Activated naive CD4-positive, alpha-beta T cell treated with anti-CD3 and anti-CD28 coated beads for 36 hours (primary cell): ENCODE measurements at regions of chr2 and their contacts with region 1.

Region 1: GRCh38 chr2:130824492-130825061 is 12.1 kb upstream of the ARHGEF4 start:
- DNase-seq: peak; percentile 84
- H3K4me3 Mint-ChIP-seq: no peak overlapping the region
- H3K27ac Mint-ChIP-seq: peak overlapping the region; percentile 86
- H3K4me1 Mint-ChIP-seq: peaks cover 19% of the 10 kb centered on the region
- H3K27me3 Mint-ChIP-seq: peaks cover 4% of the 10 kb centered on the region

Region 2: GRCh38 chr2:130727286-130728018 is 97.1 kb before region 1 on chr2:
- CTCF ChIA-PET with region 1: no interaction called
- intact Hi-C with region 1: loop called (anchors 1 kb)
- DNase-seq: peak; percentile 92
- H3K4me3 Mint-ChIP-seq: peak overlapping the region; percentile 73
- H3K27ac Mint-ChIP-seq: peak overlapping the region; percentile 43
- H3K4me1 Mint-ChIP-seq: peaks cover 7% of the 10 kb centered on the region
- H3K27me3 Mint-ChIP-seq: no peaks in the 10 kb centered on the region

Region 3: GRCh38 chr2:130836501-130837174 is 12.1 kb after region 1 on chr2 and contains the start of gene ARHGEF4:
- CTCF ChIA-PET with region 1: interaction called, 3 read pairs
- intact Hi-C with region 1: loop called (anchors 1 kb)
- DNase-seq: peak; percentile 42
- H3K4me3 Mint-ChIP-seq: peak within 1 kb of the TSS; percentile 42
- H3K27ac Mint-ChIP-seq: no peak within 1 kb of the TSS
- H3K4me1 Mint-ChIP-seq: peaks cover 4% of the 10 kb centered on the region
- H3K27me3 Mint-ChIP-seq: peaks cover 42% of the 10 kb centered on the region
- total RNA-seq, gene ARHGEF4: 2.6 to 3.3 TPM

Region 4: GRCh38 chr2:130873700-130874346 is 49.2 kb after region 1 on chr2:
- CTCF ChIA-PET with region 1: interaction called, 11 read pairs
- intact Hi-C with region 1: loop called (anchors 1 kb)
- DNase-seq: peak; percentile 86
- H3K4me3 Mint-ChIP-seq: no peak overlapping the region
- H3K27ac Mint-ChIP-seq: no peak overlapping the region
- H3K4me1 Mint-ChIP-seq: no peaks in the 10 kb centered on the region
- H3K27me3 Mint-ChIP-seq: peaks cover 5% of the 10 kb centered on the region

Region 5: DNA sequence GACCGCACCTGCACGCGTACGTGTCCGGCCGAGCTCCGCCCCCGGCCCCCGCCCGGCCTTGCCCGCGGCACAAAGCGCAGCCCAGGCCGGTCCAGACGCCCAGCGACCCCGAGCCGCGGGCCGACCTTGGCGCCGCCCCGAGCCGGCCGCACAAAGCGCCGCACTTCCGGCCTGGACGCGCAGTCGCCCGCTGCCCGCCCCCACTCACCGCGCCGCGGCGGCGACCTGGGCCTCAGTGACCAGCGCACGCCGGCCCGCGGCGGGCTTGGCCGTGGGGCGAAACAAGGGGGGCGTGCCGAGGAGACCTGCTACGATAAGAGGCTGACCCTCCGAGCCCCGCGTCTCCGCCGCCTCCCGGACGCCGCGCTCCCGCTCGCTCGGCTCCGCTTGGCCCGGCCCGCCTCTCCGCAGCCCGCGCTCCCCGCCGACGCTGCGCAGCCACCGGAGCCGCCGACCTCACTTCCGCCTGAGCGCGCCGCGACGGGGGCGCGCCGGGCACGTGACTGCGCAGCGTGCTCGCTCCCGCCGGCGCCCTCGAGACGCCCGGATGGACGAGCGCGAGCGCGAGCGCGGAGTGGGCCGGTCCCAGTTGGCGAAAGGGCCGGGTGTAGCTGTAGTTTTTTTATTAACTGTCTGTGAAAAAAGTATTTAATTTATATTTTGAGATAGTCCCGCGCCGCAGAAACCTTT is 268.6 kb after region 1 on chr2 and contains the start of gene FAM168B:
- CTCF ChIA-PET with region 1: no interaction called
- intact Hi-C with region 1: loop called (anchors 2 kb)
- DNase-seq: peak; percentile 86
- H3K4me3 Mint-ChIP-seq: peak within 1 kb of the TSS; percentile 85
- H3K27ac Mint-ChIP-seq: peak within 1 kb of the TSS; percentile 92
- H3K4me1 Mint-ChIP-seq: peaks cover 20% of the 10 kb centered on the region
- H3K27me3 Mint-ChIP-seq: no peaks in the 10 kb centered on the region
- total RNA-seq, gene FAM168B: 52.7 to 55.0 TPM

Region 6: GRCh38 chr2:131105156-131105949 is 280.8 kb after region 1 on chr2 and contains the start of gene PLEKHB2:
- CTCF ChIA-PET with region 1: no interaction called
- intact Hi-C with region 1: loop called (anchors 1 kb)
- DNase-seq: peak; percentile 92
- H3K4me3 Mint-ChIP-seq: peak within 1 kb of the TSS; percentile 93
- H3K27ac Mint-ChIP-seq: peak within 1 kb of the TSS; percentile 98
- H3K4me1 Mint-ChIP-seq: peaks cover 40% of the 10 kb centered on the region
- H3K27me3 Mint-ChIP-seq: no peaks in the 10 kb centered on the region
- total RNA-seq, gene PLEKHB2: 43.4 to 43.9 TPM